ENCODE measurements at regions of chr7 and their contacts with region 1.

Region 1: GRCh38 chr7:108181073-108181985 is 51.2 kb upstream of the LAMB4 start:
- DNase-seq: no peak
- ATAC-seq: peak; percentile 62
- H3K4me3 Mint-ChIP-seq: no peak overlapping the region
- H3K27ac Mint-ChIP-seq: no peak overlapping the region
- H3K4me1 Mint-ChIP-seq: no peaks in the 10 kb centered on the region
- H3K27me3 Mint-ChIP-seq: no peaks in the 10 kb centered on the region
- CTCF ChIP-seq: peak; percentile 81

Region 2: DNA sequence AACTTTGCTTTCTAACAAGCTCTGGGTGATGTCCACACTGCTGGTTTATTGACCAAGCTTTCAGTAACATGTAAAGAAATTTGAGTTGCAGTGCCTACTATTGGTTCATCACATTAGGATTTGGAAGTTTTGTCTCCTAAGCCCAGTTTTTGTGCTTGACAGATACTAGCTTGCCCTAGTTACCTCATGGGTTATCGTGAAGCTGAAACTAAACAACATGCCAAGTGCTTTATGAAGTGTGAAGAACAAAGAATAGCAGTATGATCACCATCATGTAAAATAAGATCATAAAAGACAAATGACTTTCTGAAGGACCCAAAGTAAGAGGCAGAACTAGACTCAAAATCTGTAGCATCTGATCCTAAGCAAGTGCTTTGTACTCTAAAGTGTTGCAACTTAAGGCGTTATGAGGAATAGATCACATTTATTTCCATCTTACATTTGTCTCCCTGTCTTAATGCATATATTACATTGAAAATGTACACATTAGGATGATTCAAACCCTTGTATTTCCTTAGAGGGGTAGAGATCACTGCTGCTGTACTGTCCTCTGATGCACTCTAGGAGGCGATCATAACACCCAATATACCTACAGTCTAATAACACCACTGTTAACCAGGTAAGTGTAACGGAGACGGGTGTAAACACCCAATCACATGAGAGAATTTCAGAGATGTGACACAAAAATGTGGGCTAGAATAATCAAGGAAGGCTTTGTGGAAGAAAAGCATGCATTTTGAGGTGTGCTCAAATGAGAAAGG is 203.6 kb after region 1 on chr7:
- CTCF ChIA-PET with region 1: interaction called, 4 read pairs
- POLR2A ChIA-PET with region 1: no interaction called
- intact Hi-C with region 1: loop called (anchors 10 kb)
- DNase-seq: no peak
- ATAC-seq: peak; percentile 82
- H3K4me3 Mint-ChIP-seq: no peak overlapping the region
- H3K27ac Mint-ChIP-seq: no peak overlapping the region
- H3K4me1 Mint-ChIP-seq: peaks cover 15% of the 10 kb centered on the region
- H3K27me3 Mint-ChIP-seq: no peaks in the 10 kb centered on the region
- CTCF ChIP-seq: peak; percentile 44

Region 3: GRCh38 chr7:108459931-108460551 is 278.7 kb after region 1 on chr7:
- CTCF ChIA-PET with region 1: interaction called, 12 read pairs
- POLR2A ChIA-PET with region 1: no interaction called
- intact Hi-C with region 1: loop called (anchors 2 kb)
- DNase-seq: peak; percentile 66
- ATAC-seq: peak; percentile 32
- H3K4me3 Mint-ChIP-seq: no peak overlapping the region
- H3K27ac Mint-ChIP-seq: no peak overlapping the region
- H3K4me1 Mint-ChIP-seq: peaks cover 40% of the 10 kb centered on the region
- H3K27me3 Mint-ChIP-seq: peaks cover 18% of the 10 kb centered on the region
- CTCF ChIP-seq: peak; percentile 58